ENCODE measurements at regions of chr20 and their contacts with region 1.

Region 1: DNA sequence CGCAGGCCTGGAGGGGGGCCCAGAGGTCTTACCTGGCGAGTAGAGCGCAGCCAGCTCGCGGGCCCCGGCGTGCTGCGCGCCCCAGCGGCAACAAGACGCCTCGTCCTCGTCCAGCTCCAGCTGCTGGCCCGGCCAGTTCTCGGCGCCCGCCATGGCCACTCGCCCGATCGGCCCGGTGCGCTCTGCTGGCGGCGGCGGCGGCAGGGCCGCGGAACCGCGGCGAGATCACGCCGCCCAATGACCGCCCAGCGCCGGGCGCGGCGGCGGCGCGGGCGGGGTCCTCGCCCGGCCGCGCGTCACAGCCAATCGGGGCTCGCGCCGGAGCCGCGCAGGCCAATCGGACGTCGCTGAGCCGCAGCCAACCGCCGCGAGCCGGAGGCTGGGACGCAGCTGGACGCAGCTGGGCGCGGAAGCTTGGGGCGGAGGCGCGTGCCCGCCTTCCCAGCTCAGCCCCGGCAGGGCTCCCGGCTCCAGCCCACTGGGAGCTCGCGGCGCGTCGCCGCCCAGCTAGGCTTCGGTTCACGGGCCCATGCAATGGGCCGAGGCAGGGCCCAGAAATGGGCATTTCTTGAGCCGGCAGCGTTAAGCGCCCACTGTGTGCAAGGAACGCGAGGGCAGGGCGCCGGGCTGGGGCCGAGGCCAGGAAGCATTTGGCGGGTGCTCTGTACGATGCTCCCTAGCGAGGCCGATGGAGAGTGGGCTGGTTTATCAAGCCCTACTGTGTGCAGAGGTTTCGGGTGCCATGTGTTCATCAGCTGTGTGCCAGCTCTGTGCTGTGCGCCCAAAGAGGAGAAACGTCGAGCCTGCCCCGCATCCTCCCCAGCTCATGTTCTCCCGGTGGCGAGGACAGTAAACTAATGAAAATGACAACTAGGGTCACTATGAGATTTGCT is at the start of gene PEDS1:
- DNase-seq: peak; percentile 45 to 90 (median 71)
- ATAC-seq: peak; percentile 97 to 98 (median 98)
- H3K4me3 ChIP-seq: peak within 1 kb of the TSS; percentile 89 to 95
- H3K4me3 Mint-ChIP-seq: peak within 1 kb of the TSS; percentile 85 to 89 (median 87)
- H3K27ac ChIP-seq: peak within 1 kb of the TSS; percentile 78
- H3K27ac Mint-ChIP-seq: peak within 1 kb of the TSS; percentile 89 to 95
- H3K4me1 ChIP-seq: peaks cover 20 to 53% of the 10 kb centered on the region in 2 experiments
- H3K4me1 Mint-ChIP-seq: peaks cover 41 to 51% (median 42%) of the 10 kb centered on the region in 3 donors
- H3K27me3 ChIP-seq: no peaks in the 10 kb centered on the region
- H3K27me3 Mint-ChIP-seq: no peaks in the 10 kb centered on the region
- total RNA-seq, gene PEDS1: 17.6 to 20.0 (median 18.3) TPM

Region 2: GRCh38 chr20:49641683-49642656 is 511.8 kb before region 1 on chr20:
- CTCF ChIA-PET with region 1: no interaction called
- POLR2A ChIA-PET with region 1: interaction called in 1 of 2 experiments, 10 read pairs
- DNase-seq: no peak
- ATAC-seq: no peak
- H3K4me3 ChIP-seq: no peak overlapping the region
- H3K4me3 Mint-ChIP-seq: no peak overlapping the region
- H3K27ac ChIP-seq: no peak overlapping the region
- H3K27ac Mint-ChIP-seq: peak overlapping the region in 1 of 2 donors; percentile 55
- H3K4me1 ChIP-seq: peaks cover 0 to 5% of the 10 kb centered on the region in 2 experiments
- H3K4me1 Mint-ChIP-seq: peaks cover 0 to 8% (median 0%) of the 10 kb centered on the region in 3 donors
- H3K27me3 ChIP-seq: no peaks in the 10 kb centered on the region
- H3K27me3 Mint-ChIP-seq: no peaks in the 10 kb centered on the region

Region 3: DNA sequence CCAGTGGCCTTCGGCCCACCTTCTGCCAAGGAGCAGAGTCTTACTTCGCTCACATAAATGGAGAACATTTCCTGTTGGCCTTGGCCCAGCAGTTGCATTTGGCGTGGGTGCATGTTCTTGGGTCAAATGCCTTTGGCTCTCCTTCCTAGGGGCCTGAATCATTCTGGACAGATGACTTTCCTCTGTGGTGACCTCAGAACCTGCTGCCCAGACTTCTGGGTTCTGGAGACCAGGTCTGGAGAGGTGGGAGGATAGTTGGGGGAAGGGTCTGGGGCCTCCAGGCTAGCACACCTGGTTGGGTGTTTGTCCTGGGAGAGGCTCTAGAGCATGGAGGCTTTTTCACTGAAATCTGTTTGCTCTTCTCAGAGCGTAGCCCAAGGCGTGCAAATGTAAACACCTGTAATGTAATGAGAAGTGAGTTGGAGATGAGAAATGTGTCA is 670.5 kb after region 1 on chr20:
- CTCF ChIA-PET with region 1: no interaction called
- POLR2A ChIA-PET with region 1: no interaction called
- DNase-seq: no peak
- ATAC-seq: no peak
- H3K4me3 ChIP-seq: no peak overlapping the region
- H3K4me3 Mint-ChIP-seq: no peak overlapping the region
- H3K27ac ChIP-seq: no peak overlapping the region
- H3K27ac Mint-ChIP-seq: no peak overlapping the region
- H3K4me1 ChIP-seq: peaks cover 0 to 16% of the 10 kb centered on the region in 2 experiments
- H3K4me1 Mint-ChIP-seq: peaks cover 13 to 29% (median 25%) of the 10 kb centered on the region in 3 donors
- H3K27me3 ChIP-seq: no peaks in the 10 kb centered on the region
- H3K27me3 Mint-ChIP-seq: no peaks in the 10 kb centered on the region